T-cell (primary cell): ENCODE measurements at regions of chr18 and their contacts with region 1.

Region 1: DNA sequence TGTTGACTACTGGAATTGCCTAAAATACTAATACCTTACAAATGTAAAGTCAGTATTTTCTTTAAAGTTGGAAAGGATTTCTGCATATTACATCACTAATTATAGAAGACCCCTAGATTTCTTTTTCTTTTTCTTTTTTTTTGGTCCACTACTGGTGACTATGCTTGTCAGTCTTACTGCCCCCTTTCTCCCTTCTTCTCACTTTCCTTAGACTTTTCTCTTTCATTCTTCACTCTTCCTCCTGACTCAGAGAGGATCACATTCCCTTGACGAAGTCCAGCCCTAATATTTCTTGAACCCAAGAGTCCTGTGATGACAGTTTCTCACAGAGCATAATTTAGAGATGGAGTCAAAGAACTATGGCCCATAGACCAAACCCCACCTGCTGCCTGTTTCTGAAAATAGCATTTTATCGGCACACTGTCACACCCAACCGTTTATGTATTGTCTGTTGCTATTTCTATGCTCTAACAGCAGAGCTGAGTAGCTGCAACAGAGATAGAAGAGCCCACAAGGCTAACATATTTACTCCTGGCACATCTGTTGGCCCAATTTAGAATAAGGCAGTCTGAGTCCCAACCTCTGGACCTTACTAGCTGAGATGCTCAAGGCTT is 40.6 kb upstream of the RIOK3 start:
- DNase-seq: no peak
- ATAC-seq: no peak
- H3K4me3 ChIP-seq: no peak overlapping the region
- H3K4me3 Mint-ChIP-seq: no peak overlapping the region
- H3K27ac ChIP-seq: no peak overlapping the region
- H3K27ac Mint-ChIP-seq: no peak overlapping the region
- H3K4me1 ChIP-seq: no peaks in the 10 kb centered on the region
- H3K4me1 Mint-ChIP-seq: no peaks in the 10 kb centered on the region
- H3K27me3 ChIP-seq: no peaks in the 10 kb centered on the region
- H3K27me3 Mint-ChIP-seq: no peaks in the 10 kb centered on the region

Region 2: DNA sequence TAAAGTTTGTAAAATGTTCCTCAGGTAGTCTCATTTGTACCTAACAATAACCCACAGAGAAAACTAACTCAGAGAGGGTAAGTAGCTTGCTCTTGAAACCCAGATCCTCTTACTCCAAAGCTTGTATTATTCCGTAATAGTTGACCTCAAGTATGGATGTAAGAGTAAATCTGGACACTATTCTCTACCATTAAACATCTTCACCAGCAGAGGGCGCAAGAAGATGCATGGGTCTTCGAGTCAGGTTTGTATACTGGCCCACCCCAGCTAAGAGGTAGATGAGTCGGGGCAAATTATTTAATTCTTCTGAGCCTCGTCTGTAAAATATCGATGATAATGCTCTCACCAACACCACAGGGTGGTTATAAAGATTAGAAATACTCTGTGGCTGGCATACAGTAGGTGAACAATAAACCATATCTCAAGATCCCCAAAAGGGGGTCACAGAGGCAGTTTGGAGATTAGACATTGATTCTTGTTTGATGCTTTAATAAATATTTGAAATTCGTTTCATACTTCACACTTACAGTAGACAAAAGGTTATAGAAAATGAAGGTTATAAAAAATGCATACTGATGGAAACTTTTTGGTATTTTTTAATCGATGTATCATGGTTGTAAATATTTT is 280.7 kb before region 1 on chr18:
- CTCF ChIA-PET with region 1: interaction called, 5 to 18 read pairs
- POLR2A ChIA-PET with region 1: no interaction called
- DNase-seq: peak in 28 of 35 experiments; percentile 9 to 86 (median 44)
- ATAC-seq: peak in 1 of 4 experiments; percentile 41
- H3K4me3 ChIP-seq: no peak overlapping the region
- H3K4me3 Mint-ChIP-seq: no peak overlapping the region
- H3K27ac ChIP-seq: no peak overlapping the region
- H3K27ac Mint-ChIP-seq: no peak overlapping the region
- H3K4me1 ChIP-seq: peaks cover 7 to 20% of the 10 kb centered on the region in 2 experiments
- H3K4me1 Mint-ChIP-seq: peaks cover 8 to 17% (median 8%) of the 10 kb centered on the region in 3 donors
- H3K27me3 ChIP-seq: peaks cover 4 to 38% of the 10 kb centered on the region in 2 experiments
- H3K27me3 Mint-ChIP-seq: peaks cover 20 to 36% of the 10 kb centered on the region in 2 donors